Mammary epithelial cell (primary cell): ENCODE measurements at regions of chr14 and their contacts with region 1.

Region 1: GRCh38 chr14:103910262-103910935 is 17.9 kb upstream of the TDRD9 start:
- DNase-seq: peak; percentile 93
- H3K4me3 ChIP-seq: peak overlapping the region in 1 of 3 experiments; percentile 2
- H3K27ac ChIP-seq: no peak overlapping the region
- H3K4me1 ChIP-seq: peaks cover 8% of the 10 kb centered on the region
- H3K27me3 ChIP-seq: no peaks in the 10 kb centered on the region
- CTCF ChIP-seq: peak; percentile 92 to 94

Region 2: DNA sequence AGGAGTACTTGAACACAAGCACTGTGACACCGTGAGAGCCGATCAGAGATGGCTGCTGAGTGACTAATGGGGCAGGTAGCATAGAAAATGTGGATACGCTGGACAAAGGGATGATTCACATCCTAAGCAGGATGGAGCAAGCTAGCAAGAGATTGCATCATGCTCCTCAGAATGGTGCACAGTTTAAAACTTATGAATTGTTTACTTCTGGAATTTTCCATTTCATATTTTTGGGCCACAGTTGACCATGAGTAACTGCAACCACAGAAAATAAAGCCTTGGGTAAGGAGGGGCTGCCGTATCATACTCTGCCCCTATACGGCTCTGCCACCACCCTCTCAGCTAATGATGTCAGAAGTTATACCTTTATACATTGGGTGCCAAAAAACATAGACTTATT is 548.5 kb before region 1 on chr14:
- CTCF ChIA-PET with region 1: no interaction called
- dilution Hi-C with region 1: no loop called
- in situ Hi-C with region 1: no loop called
- intact Hi-C with region 1: no loop called
- DNase-seq: peak; percentile 98
- H3K4me3 ChIP-seq: no peak overlapping the region
- H3K27ac ChIP-seq: peak overlapping the region; percentile 83
- H3K4me1 ChIP-seq: peaks cover 23% of the 10 kb centered on the region
- H3K27me3 ChIP-seq: no peaks in the 10 kb centered on the region
- CTCF ChIP-seq: no peak

Region 3: GRCh38 chr14:103576371-103577024 is 333.9 kb before region 1 on chr14:
- CTCF ChIA-PET with region 1: no interaction called
- dilution Hi-C with region 1: no loop called
- in situ Hi-C with region 1: loop called in 1 of 2 experiments (anchors 10 kb)
- intact Hi-C with region 1: loop called (anchors 2 kb)
- DNase-seq: peak; percentile 83
- H3K4me3 ChIP-seq: no peak overlapping the region
- H3K27ac ChIP-seq: peak overlapping the region; percentile 60
- H3K4me1 ChIP-seq: peaks cover 19% of the 10 kb centered on the region
- H3K27me3 ChIP-seq: no peaks in the 10 kb centered on the region
- CTCF ChIP-seq: no peak

Region 4: DNA sequence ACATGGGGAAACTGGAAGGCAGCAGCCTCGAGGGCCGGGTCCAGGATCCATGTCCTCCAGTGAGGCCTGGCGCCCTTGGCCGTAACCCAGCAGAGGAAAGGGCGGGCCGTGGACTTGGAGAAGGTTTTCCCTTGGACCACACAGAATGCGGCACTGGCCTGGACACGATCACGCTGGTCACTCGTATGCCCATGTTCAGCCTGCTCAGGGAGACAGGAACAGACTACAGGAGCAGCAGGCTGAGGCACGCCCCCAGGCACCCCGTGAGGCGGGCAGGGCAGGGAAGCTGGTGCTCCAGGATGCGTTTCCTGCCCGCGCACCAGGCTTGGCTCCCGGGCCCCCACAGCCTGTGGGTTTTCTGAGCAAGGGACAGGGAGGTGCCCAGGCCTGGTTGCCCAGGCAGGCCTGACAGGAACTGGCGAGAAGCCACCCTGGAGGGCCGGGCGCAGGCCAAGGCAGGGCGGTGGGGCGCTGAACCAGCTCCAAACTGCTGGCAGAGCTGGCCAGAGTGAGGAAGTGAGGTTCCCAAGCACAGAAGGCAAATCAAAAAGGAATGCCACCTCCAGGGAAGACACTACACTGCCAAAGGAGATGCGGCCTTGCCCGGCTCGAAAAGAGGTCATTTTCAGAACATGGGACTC is 198.4 kb before region 1 on chr14:
- CTCF ChIA-PET with region 1: no interaction called
- dilution Hi-C with region 1: no loop called
- in situ Hi-C with region 1: no loop called
- intact Hi-C with region 1: loop called (anchors 2 kb)
- DNase-seq: peak; percentile 86
- H3K4me3 ChIP-seq: peak overlapping the region in 1 of 3 experiments; percentile 5
- H3K27ac ChIP-seq: peak overlapping the region; percentile 44
- H3K4me1 ChIP-seq: peaks cover 56% of the 10 kb centered on the region
- H3K27me3 ChIP-seq: no peaks in the 10 kb centered on the region
- CTCF ChIP-seq: no peak

Region 5: DNA sequence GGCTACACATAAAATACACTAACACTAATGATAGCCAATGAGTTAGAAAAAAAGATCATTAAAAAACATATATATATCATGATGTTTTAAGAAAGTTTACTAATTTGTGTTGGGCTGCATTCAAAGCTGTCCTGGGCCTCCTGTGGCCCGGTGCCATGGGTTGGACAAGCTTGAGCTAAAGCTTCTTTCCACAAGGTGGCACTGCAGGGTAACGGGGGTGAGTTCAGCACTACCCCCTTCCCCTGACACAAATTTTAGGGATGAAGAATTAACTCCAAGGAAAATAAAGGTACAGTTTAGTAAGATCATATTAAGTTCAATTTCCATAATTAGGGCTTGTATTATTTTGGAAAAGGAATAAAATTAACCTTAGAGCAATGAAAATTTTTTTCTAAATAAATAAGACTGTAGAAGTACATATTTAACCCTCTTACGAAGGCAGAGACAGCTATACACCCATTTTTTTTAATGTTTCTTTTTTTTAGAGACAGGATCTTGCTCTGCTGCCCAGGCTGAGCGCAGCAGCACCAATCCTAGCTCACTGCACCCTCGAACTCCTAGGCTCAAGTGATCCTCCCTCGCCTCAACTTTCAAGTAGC is 101.9 kb before region 1 on chr14:
- CTCF ChIA-PET with region 1: interaction called, 8 read pairs
- dilution Hi-C with region 1: loop called (anchors 5 kb)
- in situ Hi-C with region 1: loop called (anchors 5 kb)
- intact Hi-C with region 1: loop called (anchors 1 kb)
- DNase-seq: peak; percentile 54
- H3K4me3 ChIP-seq: no peak overlapping the region
- H3K27ac ChIP-seq: no peak overlapping the region
- H3K4me1 ChIP-seq: peaks cover 11% of the 10 kb centered on the region
- H3K27me3 ChIP-seq: no peaks in the 10 kb centered on the region
- CTCF ChIP-seq: peak; percentile 83 to 92

Region 6: DNA sequence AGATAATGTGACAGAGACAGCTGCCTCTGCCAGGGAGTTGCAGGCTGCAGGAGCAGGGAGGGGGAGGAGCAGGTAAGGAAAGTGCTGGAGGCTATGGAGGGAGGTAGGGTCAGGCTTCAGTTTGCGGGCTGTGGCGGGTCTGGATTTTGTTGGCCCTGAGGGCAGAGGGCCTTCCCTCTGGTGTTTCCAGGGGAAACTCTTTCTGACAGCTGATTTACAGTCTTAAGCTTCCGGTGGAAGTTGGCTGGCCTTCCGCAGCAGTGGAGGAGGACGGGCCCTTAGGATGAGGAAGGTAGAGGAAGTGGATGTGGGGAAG is 55.7 kb before region 1 on chr14:
- CTCF ChIA-PET with region 1: interaction called, 25 read pairs
- dilution Hi-C with region 1: no loop called
- in situ Hi-C with region 1: no loop called
- intact Hi-C with region 1: no loop called
- DNase-seq: no peak
- H3K4me3 ChIP-seq: no peak overlapping the region
- H3K27ac ChIP-seq: no peak overlapping the region
- H3K4me1 ChIP-seq: peaks cover 12% of the 10 kb centered on the region
- H3K27me3 ChIP-seq: no peaks in the 10 kb centered on the region
- CTCF ChIP-seq: no peak

Region 7: DNA sequence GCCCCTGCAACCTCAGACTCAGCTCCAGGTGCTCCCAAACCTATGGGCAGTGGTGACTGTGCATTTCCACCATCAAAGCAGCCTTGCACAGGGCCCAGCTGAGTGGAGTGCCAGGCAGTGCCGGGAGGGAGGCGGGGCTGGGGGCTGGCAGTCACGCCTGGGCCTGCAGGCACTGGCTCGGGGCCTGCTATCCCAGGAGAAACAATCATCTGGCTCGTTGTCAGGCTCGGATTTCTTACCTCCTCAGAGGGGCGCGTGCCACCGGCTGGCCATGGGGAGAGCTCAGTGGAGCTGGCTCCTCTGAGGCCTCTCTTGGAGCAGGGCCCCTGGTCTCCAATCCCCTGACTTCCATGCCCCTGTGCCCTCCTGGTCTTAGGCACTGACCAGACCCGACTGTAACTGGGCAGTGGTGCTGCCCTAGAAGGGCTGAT is 42.9 kb before region 1 on chr14:
- CTCF ChIA-PET with region 1: no interaction called
- dilution Hi-C with region 1: no loop called
- in situ Hi-C with region 1: no loop called
- intact Hi-C with region 1: loop called (anchors 5 kb)
- DNase-seq: peak; percentile 70
- H3K4me3 ChIP-seq: no peak overlapping the region
- H3K27ac ChIP-seq: no peak overlapping the region
- H3K4me1 ChIP-seq: peaks cover 30% of the 10 kb centered on the region
- H3K27me3 ChIP-seq: no peaks in the 10 kb centered on the region
- CTCF ChIP-seq: no peak

Region 8: DNA sequence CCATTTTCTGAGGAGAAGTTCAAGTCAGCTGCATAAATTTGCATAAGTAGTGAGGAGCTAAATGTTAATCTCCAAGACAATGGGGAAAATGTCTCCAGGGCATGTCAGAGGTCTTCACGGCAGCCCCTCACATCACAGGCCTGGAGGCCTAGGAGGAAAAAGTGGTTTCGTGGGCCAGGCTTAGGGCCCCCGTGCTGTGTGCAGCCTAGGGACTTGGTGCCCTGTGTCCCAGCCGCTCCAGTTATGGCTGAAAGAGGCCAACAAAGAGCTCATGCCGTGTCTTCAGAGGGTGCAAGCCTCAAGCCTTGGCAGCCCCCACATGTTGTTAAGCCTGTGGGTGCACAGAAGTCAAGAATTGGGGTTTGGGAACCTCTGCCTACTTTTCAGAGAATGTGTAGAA is 73.8 kb after region 1 on chr14:
- CTCF ChIA-PET with region 1: no interaction called
- dilution Hi-C with region 1: no loop called
- in situ Hi-C with region 1: loop called in 1 of 2 experiments (anchors 5 kb)
- intact Hi-C with region 1: loop called (anchors 1 kb)
- DNase-seq: no peak
- H3K4me3 ChIP-seq: no peak overlapping the region
- H3K27ac ChIP-seq: no peak overlapping the region
- H3K4me1 ChIP-seq: no peaks in the 10 kb centered on the region
- H3K27me3 ChIP-seq: no peaks in the 10 kb centered on the region
- CTCF ChIP-seq: no peak